Sigmoid colon (tissue), 7 donors: ENCODE measurements at regions of chr7 and their contacts with region 1.

Region 1: GRCh38 chr7:39894904-39895303 is 55.2 kb upstream of the CDK13 start:
- DNase-seq: no peak
- H3K4me3 ChIP-seq: no peak overlapping the region
- H3K27ac ChIP-seq: no peak overlapping the region
- H3K4me1 ChIP-seq: no peaks in the 10 kb centered on the region
- H3K27me3 ChIP-seq: no peaks in the 10 kb centered on the region
- CTCF ChIP-seq: no peak
- EP300 ChIP-seq: no peak
- POLR2A ChIP-seq: no peak

Region 2: DNA sequence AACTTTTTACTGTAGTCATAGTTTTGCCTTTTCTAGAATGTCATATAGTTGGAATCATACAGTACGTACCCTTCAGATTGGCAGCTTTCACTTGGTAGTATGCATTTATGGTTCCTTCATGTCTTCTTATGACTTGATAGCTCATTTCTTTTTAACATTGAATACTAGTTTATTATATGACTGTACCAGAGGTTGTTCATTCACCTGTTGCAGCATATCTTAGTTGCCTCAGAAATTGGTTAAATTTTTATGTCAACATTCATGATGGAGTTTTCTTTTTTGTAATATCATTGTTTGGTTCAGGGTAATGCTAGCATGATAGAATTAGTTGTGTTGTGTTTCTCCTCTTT is 39.6 kb before region 1 on chr7:
- intact Hi-C with region 1: no loop called
- DNase-seq: no peak
- H3K4me3 ChIP-seq: peak overlapping the region; percentile 14 to 43 (median 32)
- H3K27ac ChIP-seq: no peak overlapping the region
- H3K4me1 ChIP-seq: no peaks in the 10 kb centered on the region
- H3K27me3 ChIP-seq: peaks cover 0 to 11% (median 0%) of the 10 kb centered on the region in 3 donors
- CTCF ChIP-seq: no peak
- EP300 ChIP-seq: no peak
- POLR2A ChIP-seq: no peak

Region 3: DNA sequence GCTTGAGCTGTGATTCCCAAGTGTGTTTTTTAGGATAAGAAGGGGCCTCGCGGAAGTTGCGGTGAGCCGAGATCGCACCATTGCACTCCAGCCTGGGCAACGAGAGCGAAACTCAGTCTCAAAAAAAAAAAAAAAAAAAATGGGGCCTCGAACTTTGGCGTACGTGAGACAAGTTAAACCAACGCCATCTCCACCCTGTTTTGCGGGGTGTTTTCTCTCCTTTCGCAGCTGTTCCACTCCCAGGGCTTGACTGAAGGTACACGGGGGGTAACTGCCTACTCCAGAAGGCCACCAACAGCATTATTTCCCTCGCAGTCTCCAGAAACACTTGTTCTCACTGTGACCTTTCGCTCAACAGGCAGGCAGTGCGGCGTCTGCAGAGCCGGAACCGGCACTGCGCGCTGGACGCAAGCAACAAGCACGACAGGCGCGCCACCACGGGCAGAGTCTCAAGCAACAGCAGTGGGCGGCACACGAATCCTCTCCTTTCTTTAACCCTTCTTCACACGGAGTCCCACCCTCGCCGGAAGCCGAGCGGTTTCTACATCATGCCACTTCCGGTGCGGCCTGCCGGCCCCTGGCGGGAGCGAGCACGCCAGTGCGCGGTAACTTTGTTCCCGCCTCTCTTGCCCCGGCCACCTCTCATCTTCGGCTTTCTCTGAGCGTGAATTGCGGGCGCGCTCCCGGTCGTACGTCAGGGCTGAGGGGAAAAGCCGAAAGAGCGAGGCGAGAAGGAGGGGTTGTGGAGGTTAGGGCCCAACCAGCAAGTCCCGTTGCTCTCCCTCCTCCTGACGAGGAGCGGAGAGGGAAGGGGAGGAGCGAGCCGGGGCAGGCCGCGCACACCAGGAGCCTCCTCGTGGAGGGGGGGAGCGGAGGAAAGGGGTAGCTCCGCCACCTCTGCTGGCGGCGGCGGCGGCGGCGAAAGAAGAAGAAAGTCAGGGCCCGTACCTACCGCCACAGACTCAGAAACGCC is 54.3 kb after region 1 on chr7:
- intact Hi-C with region 1: loop called (anchors 5 kb)
- DNase-seq: peak; percentile 99
- H3K4me3 ChIP-seq: peak overlapping the region; percentile 84 to 94 (median 92)
- H3K27ac ChIP-seq: peak overlapping the region; percentile 92 to 100 (median 98)
- H3K4me1 ChIP-seq: peaks cover 0 to 26% (median 20%) of the 10 kb centered on the region in 4 donors
- H3K27me3 ChIP-seq: no peaks in the 10 kb centered on the region
- CTCF ChIP-seq: no peak
- EP300 ChIP-seq: peak in 1 of 4 donors; percentile 39
- POLR2A ChIP-seq: peak; percentile 79 to 87

Region 4: GRCh38 chr7:40057292-40057691 is 162.4 kb after region 1 on chr7:
- intact Hi-C with region 1: loop called (anchors 1 kb)
- DNase-seq: no peak
- H3K4me3 ChIP-seq: no peak overlapping the region
- H3K27ac ChIP-seq: no peak overlapping the region
- H3K4me1 ChIP-seq: peaks cover 0 to 16% (median 1%) of the 10 kb centered on the region in 4 donors
- H3K27me3 ChIP-seq: no peaks in the 10 kb centered on the region
- CTCF ChIP-seq: no peak
- EP300 ChIP-seq: no peak
- POLR2A ChIP-seq: no peak

Region 5: GRCh38 chr7:40134428-40135316 is 239.8 kb after region 1 on chr7 and contains the starts of genes MPLKIP and SUGCT:
- intact Hi-C with region 1: loop called (anchors 5 kb)
- DNase-seq: peak; percentile 93
- H3K4me3 ChIP-seq: peak within 1 kb of the TSS; percentile 71 to 93 (median 86)
- H3K27ac ChIP-seq: peak within 1 kb of the TSS; percentile 83 to 93 (median 90)
- H3K4me1 ChIP-seq: peaks cover 3 to 41% (median 30%) of the 10 kb centered on the region in 4 donors
- H3K27me3 ChIP-seq: no peaks in the 10 kb centered on the region
- CTCF ChIP-seq: peak; percentile 86 to 99 (median 91)
- EP300 ChIP-seq: no peak
- POLR2A ChIP-seq: peak; percentile 47 to 55
- total RNA-seq, gene MPLKIP: 26.9 to 43.1 (median 31.8) TPM
- total RNA-seq, gene SUGCT: 2.3 to 14.0 (median 4.2) TPM